PC-3 (cell line): ENCODE measurements at regions of chr4 and their contacts with region 1.

Region 1: GRCh38 chr4:139633661-139634060 is 32.0 kb upstream of the MGST2 start:
- DNase-seq: peak; percentile 70
- ATAC-seq: peak; percentile 95
- H3K4me3 ChIP-seq: peak overlapping the region; percentile 71
- H3K27ac ChIP-seq: no peak overlapping the region
- H3K4me1 ChIP-seq: peaks cover 13% of the 10 kb centered on the region
- H3K27me3 ChIP-seq: no peaks in the 10 kb centered on the region
- CTCF ChIP-seq: peak; percentile 60

Region 2: DNA sequence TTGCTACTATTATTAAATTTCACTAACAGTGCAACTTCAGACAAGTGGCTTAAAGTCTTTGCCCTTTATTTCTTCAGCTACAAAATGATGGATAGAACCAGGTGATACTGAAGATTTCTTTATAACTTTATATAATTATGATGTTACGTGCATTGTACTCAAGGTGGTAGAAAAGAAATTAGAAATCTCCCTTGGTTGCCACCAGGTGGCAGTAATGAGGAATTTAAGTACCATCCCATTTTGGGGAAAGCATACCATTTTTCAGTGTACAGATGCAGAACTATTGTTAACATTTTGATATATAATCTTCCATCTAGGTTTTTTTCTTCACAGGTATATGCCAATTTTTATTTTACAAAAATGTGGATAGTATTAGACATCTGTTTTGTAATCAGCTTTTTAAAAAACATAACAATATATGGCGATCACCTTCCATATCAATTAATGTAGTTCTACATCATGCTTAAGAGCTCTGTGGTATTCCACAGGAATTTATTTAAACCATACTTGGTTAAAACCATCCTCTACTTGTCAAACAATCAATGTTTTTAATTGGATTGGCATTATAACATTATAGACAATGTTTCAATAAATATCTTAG is 217.5 kb before region 1 on chr4:
- CTCF ChIA-PET with region 1: no interaction called
- POLR2A ChIA-PET with region 1: no interaction called
- intact Hi-C with region 1: loop called (anchors 1 kb)
- DNase-seq: peak; percentile 34
- ATAC-seq: no peak
- H3K4me3 ChIP-seq: no peak overlapping the region
- H3K27ac ChIP-seq: no peak overlapping the region
- H3K4me1 ChIP-seq: no peaks in the 10 kb centered on the region
- H3K27me3 ChIP-seq: no peaks in the 10 kb centered on the region
- CTCF ChIP-seq: peak; percentile 66

Region 3: GRCh38 chr4:139603576-139604387 is 29.9 kb before region 1 on chr4:
- CTCF ChIA-PET with region 1: interaction called, 13 read pairs
- POLR2A ChIA-PET with region 1: no interaction called
- intact Hi-C with region 1: loop called (anchors 1 kb)
- DNase-seq: peak; percentile 73
- ATAC-seq: peak; percentile 20; the same call in 1 of the 2 replicates
- H3K4me3 ChIP-seq: no peak overlapping the region
- H3K27ac ChIP-seq: no peak overlapping the region
- H3K4me1 ChIP-seq: peaks cover 30% of the 10 kb centered on the region
- H3K27me3 ChIP-seq: no peaks in the 10 kb centered on the region
- CTCF ChIP-seq: peak; percentile 75

Region 4: GRCh38 chr4:139619644-139620043 is 14.0 kb before region 1 on chr4:
- CTCF ChIA-PET with region 1: interaction called, 6 read pairs
- POLR2A ChIA-PET with region 1: no interaction called
- intact Hi-C with region 1: loop called (anchors 1 kb)
- DNase-seq: peak; percentile 64
- ATAC-seq: peak; percentile 81
- H3K4me3 ChIP-seq: no peak overlapping the region
- H3K27ac ChIP-seq: no peak overlapping the region
- H3K4me1 ChIP-seq: no peaks in the 10 kb centered on the region
- H3K27me3 ChIP-seq: no peaks in the 10 kb centered on the region
- CTCF ChIP-seq: peak; percentile 64

Region 5: DNA sequence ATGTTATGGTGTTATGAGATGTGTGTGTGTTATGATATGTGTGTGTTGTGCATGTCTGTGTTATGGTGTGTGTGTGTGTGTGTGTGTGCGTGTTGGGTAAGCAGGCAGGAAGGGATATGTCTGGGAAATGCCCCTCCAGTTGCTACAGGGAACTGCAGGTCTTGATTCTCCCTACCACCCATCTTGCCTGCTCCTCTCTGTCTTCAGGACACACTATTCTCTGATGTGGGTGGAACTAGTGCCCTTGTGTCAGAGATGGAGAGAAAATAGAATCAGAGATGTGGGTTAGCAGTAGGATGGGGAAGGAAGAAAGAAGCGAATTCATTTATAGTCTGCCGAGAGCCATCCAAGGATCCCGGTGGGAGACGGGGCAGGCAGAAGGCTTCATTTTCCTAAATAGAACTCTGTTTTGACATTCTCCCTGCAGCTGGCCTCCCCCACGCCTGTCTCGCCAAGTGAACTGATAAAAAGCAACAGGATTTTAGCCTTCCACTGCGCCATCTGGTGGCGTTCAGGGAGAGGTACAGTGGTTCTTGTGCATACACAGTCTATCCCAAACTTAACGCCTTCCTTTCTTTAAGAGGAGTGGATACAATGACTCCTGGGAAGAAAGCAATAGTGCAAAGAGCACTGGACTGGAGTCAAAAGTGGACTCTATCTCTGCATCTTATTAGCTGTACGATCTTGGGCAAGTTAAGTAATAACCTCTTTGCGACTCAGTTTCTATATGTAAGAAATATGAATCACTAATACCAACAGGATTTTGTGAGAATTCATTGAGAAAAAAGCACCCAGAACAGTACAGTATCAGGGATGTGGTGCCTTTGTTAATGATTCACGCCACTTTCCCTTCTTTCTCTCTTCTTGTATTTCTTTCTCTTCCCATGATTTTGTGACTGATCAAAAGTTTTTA is 17.9 kb after region 1 on chr4:
- CTCF ChIA-PET with region 1: interaction called, 4 read pairs
- POLR2A ChIA-PET with region 1: no interaction called
- intact Hi-C with region 1: loop called (anchors 2 kb)
- DNase-seq: peak; percentile 68
- ATAC-seq: peak; percentile 37
- H3K4me3 ChIP-seq: no peak overlapping the region
- H3K27ac ChIP-seq: no peak overlapping the region
- H3K4me1 ChIP-seq: peaks cover 20% of the 10 kb centered on the region
- H3K27me3 ChIP-seq: no peaks in the 10 kb centered on the region
- CTCF ChIP-seq: peak; percentile 85

Region 6: GRCh38 chr4:139794158-139794954 is 160.7 kb after region 1 on chr4:
- CTCF ChIA-PET with region 1: no interaction called
- POLR2A ChIA-PET with region 1: no interaction called
- intact Hi-C with region 1: no loop called
- DNase-seq: no peak
- ATAC-seq: no peak
- H3K4me3 ChIP-seq: no peak overlapping the region
- H3K27ac ChIP-seq: no peak overlapping the region
- H3K4me1 ChIP-seq: no peaks in the 10 kb centered on the region
- H3K27me3 ChIP-seq: no peaks in the 10 kb centered on the region
- CTCF ChIP-seq: no peak

Region 7: DNA sequence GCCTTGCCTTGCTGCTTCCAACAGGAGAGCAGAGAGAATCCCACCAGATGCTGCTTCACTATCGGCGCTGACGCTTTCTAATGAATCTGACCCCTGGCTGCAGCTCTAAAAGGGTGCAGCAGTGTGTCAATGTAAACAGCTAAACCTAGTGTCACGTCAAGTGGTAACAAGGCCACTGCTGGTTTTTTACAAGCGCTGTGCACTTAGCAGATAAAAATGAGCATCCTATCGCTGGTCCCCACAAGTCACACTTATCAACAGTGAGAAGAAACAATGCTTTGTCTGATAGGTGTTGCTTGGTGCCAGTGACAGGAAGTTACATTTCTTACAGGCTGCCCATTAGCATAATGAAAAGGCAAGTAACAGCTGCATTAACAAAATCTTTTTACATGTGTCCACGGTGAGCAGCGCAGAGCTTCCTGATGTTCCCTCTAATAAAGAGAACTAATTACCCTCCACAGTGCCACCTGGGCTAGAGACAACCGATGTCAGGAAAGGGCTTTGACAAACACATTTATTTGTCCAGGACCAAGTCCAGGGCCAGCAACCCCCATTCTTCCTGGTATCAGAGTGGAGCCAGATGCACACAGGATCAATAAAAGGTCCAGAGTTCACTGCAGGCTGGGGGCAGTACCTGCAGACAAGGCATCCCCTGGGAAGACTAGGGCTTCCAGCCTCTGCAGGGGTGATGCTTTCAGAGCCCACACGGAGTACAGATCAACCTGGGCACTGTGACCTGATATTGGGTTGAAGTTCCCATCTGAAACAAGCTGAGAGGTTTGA is 208.0 kb after region 1 on chr4:
- CTCF ChIA-PET with region 1: no interaction called
- POLR2A ChIA-PET with region 1: no interaction called
- intact Hi-C with region 1: no loop called
- DNase-seq: no peak
- ATAC-seq: no peak
- H3K4me3 ChIP-seq: no peak overlapping the region
- H3K27ac ChIP-seq: no peak overlapping the region
- H3K4me1 ChIP-seq: peaks cover 13% of the 10 kb centered on the region
- H3K27me3 ChIP-seq: no peaks in the 10 kb centered on the region
- CTCF ChIP-seq: no peak

Region 8: GRCh38 chr4:140653718-140654494 is 1020.2 kb after region 1 on chr4:
- CTCF ChIA-PET with region 1: no interaction called
- POLR2A ChIA-PET with region 1: no interaction called
- intact Hi-C with region 1: no loop called
- DNase-seq: no peak
- ATAC-seq: no peak
- H3K4me3 ChIP-seq: no peak overlapping the region
- H3K27ac ChIP-seq: no peak overlapping the region
- H3K4me1 ChIP-seq: no peaks in the 10 kb centered on the region
- H3K27me3 ChIP-seq: no peaks in the 10 kb centered on the region
- CTCF ChIP-seq: no peak